ENCODE measurements at regions of chr16 and their contacts with region 1.

Region 1: DNA sequence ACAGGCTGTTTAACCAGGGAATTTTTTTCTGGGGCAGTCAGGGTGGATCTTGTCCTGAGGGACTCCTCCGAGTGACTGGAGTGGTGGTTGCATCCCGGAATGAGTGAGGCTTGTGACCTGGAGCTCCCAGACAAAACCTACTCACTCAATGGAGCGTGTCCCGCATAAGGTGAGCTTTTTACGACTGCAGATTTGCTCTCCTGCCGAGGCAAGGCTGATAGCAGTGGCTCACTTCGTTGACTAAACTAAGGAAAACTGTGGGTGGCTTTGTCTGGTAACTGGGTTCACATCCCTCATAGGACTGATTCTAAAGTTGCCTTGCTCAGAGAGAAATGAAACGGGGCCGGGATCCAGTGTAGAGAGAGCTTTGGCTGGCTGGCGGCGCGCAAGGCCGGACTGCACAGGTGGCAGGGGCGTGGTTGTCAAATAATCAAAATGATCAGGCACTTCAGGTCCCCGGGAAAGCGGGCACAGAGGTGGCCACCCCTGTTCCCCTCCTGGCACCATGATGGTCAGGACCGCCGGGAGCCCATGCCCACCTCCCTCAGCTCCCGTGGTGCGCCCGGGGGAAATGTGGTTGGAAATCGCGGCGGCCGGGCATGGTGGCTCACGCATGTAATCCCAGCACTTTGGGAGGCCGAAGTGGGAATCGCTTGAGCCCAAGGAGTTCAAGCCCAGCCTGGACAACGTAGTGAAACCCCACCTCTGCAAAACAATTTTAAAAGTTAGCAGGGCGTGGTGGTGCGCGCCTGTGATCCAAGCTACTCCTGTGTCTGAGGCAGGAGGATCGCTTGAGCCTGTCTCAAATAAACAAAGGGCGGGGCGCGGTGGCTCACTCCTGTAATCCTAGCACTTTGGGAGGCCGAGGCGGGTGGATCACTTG is 26.5 kb downstream of the ZNF213 start:
- DNase-seq: no peak
- H3K4me3 ChIP-seq: no peak overlapping the region
- H3K27ac ChIP-seq: no peak overlapping the region
- H3K4me1 ChIP-seq: no peaks in the 10 kb centered on the region
- H3K27me3 ChIP-seq: no peaks in the 10 kb centered on the region
- CTCF ChIP-seq: no peak
- POLR2A ChIP-seq: no peak

Region 2: GRCh38 chr16:3059000-3059722 is 102.2 kb before region 1 on chr16:
- intact Hi-C with region 1: loop called (anchors 10 kb)
- DNase-seq: peak; percentile 77 to 83
- H3K4me3 ChIP-seq: peak overlapping the region; percentile 70 to 89 (median 75)
- H3K27ac ChIP-seq: peak overlapping the region; percentile 75 to 80
- H3K4me1 ChIP-seq: no peaks in the 10 kb centered on the region
- H3K27me3 ChIP-seq: no peaks in the 10 kb centered on the region
- CTCF ChIP-seq: peak; percentile 55 to 97 (median 83)
- POLR2A ChIP-seq: no peak